AG04450 (cell line): ENCODE measurements at regions of chr13 and their contacts with region 1.

Region 1: GRCh38 chr13:78121459-78122348 is 203.1 kb upstream of the EDNRB start:
- DNase-seq: no peak
- H3K4me3 ChIP-seq: no peak overlapping the region
- H3K27ac ChIP-seq: no peak overlapping the region
- H3K27me3 ChIP-seq: peaks cover 3% of the 10 kb centered on the region
- CTCF ChIP-seq: peak; percentile 88

Region 2: DNA sequence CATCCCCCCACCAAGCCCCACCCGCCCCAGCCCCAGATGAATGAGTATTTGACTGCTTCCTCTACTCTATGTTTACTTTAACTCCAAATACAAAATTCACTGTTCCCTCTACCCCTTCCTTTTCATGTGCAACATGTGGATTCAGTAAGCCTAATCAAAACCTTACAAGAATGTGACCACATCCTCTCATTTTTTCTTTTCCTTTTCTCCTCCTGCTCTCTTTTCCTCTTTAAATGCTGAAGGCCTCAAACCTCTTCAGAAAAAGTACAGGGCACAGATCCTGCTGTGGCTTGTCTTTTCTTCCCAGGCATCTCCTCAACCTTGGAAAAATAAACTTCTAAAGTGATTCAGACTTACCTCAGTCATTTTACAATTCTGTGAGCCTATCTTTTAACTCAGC is 913.8 kb before region 1 on chr13:
- CTCF ChIA-PET with region 1: no interaction called
- POLR2A ChIA-PET with region 1: no interaction called
- DNase-seq: peak; percentile 78
- H3K4me3 ChIP-seq: no peak overlapping the region
- H3K27ac ChIP-seq: no peak overlapping the region
- H3K27me3 ChIP-seq: no peaks in the 10 kb centered on the region
- CTCF ChIP-seq: no peak

Region 3: GRCh38 chr13:77789376-77789775 is 332.3 kb before region 1 on chr13:
- CTCF ChIA-PET with region 1: interaction called, 142 read pairs
- POLR2A ChIA-PET with region 1: no interaction called
- DNase-seq: no peak
- H3K4me3 ChIP-seq: no peak overlapping the region
- H3K27ac ChIP-seq: no peak overlapping the region
- H3K27me3 ChIP-seq: no peaks in the 10 kb centered on the region
- CTCF ChIP-seq: no peak

Region 4: GRCh38 chr13:77909827-77910226 is 211.9 kb before region 1 on chr13:
- CTCF ChIA-PET with region 1: interaction called, 13 read pairs
- POLR2A ChIA-PET with region 1: no interaction called
- DNase-seq: no peak
- H3K4me3 ChIP-seq: no peak overlapping the region
- H3K27ac ChIP-seq: no peak overlapping the region
- H3K27me3 ChIP-seq: no peaks in the 10 kb centered on the region
- CTCF ChIP-seq: no peak

Region 5: GRCh38 chr13:78102121-78102677 is 19.5 kb before region 1 on chr13:
- CTCF ChIA-PET with region 1: interaction called, 24 read pairs
- POLR2A ChIA-PET with region 1: no interaction called
- DNase-seq: no peak
- H3K4me3 ChIP-seq: no peak overlapping the region
- H3K27ac ChIP-seq: no peak overlapping the region
- H3K27me3 ChIP-seq: no peaks in the 10 kb centered on the region
- CTCF ChIP-seq: no peak

Region 6: GRCh38 chr13:78147905-78148304 is 26.2 kb after region 1 on chr13:
- CTCF ChIA-PET with region 1: interaction called, 15 read pairs
- POLR2A ChIA-PET with region 1: no interaction called
- DNase-seq: peak; percentile 27
- H3K4me3 ChIP-seq: no peak overlapping the region
- H3K27ac ChIP-seq: no peak overlapping the region
- H3K27me3 ChIP-seq: no peaks in the 10 kb centered on the region
- CTCF ChIP-seq: no peak

Region 7: GRCh38 chr13:78265098-78265497 is 143.4 kb after region 1 on chr13:
- CTCF ChIA-PET with region 1: no interaction called
- POLR2A ChIA-PET with region 1: no interaction called
- DNase-seq: no peak
- H3K4me3 ChIP-seq: no peak overlapping the region
- H3K27ac ChIP-seq: no peak overlapping the region
- H3K27me3 ChIP-seq: no peaks in the 10 kb centered on the region
- CTCF ChIP-seq: no peak

Region 8: DNA sequence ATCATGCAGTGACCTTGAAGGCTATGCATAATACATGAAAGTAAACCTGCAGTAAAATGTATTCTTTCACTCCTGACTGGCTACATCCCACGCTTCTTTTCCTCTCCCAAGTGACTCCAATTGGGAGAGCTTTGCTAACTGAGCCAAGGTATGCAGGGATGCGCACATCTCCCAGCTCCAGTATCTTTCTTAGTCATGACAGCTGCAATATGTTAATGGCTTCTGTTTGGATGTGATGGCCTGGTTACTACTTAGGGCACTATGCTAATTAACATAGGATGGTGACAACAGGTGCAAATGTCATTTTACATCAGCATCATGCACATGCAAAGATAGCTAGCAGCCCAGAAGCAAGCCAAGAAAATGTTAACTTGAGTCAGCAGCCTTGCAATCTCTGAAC is 346.9 kb after region 1 on chr13:
- CTCF ChIA-PET with region 1: no interaction called
- POLR2A ChIA-PET with region 1: no interaction called
- DNase-seq: no peak
- H3K4me3 ChIP-seq: no peak overlapping the region
- H3K27ac ChIP-seq: no peak overlapping the region
- H3K27me3 ChIP-seq: no peaks in the 10 kb centered on the region
- CTCF ChIP-seq: no peak

Region 9: DNA sequence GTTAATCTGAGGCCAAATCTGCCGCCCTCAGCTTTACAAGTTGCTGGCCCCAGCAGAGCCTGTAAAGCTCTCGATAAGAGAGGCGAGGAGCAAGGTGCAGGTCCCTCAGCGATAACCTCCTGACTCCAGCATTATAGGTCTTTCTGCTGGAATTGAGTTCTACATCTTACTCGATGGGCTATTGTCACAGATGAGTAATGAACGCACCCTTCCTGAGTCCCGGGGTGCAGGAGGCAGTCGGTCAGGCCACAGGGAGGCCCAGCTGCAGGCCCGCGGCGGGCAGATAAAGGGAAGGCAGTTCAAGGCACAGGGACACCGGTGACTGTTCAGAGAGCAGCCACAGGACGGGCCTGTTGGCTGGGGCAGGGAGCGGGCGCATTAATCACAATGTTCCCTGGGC is 694.9 kb after region 1 on chr13:
- CTCF ChIA-PET with region 1: no interaction called
- POLR2A ChIA-PET with region 1: no interaction called
- DNase-seq: no peak
- H3K4me3 ChIP-seq: no peak overlapping the region
- H3K27ac ChIP-seq: no peak overlapping the region
- H3K27me3 ChIP-seq: no peaks in the 10 kb centered on the region
- CTCF ChIP-seq: no peak